Activated CD4-positive, alpha-beta T cell treated with anti-CD3 and anti-CD28 coated beads for 36 hours (primary cell): ENCODE measurements at regions of chr7 and their contacts with region 1.

Region 1: DNA sequence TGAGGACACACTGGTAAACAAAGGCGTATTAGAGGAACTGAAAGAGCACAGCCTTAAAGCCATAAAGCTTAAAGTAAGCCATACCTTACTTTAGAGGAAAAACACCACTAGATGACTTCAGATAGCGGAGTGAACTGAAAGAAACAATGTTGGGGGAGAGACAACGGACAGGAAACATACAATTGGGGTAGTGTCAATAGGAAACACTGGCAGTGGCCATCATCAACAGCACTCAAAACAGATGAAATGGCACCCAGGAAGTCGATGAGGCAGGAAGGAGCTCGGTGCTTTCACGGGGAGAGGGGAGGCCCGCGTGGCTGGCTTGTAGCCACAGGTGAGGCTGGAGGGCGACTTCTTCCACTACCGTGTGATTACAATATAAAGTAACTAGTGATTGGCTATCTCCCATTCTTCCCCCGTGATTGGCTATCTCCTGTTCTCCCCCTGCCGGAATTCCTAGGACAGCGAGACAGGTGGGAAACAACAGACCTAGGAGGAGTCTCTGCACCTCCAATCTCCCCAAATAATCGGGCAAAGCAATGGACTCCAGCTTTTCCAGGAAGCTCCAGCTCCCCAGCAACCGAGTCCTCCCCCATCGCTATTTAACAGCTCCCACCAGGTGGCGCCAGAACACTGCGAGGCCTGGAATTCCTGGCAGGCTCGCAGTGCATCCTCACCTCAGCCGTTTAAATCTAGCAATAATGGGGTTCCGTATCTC is 2.4 kb upstream of the TAS2R38 start:
- DNase-seq: peak; percentile 87
- ATAC-seq: peak; percentile 96
- H3K4me3 Mint-ChIP-seq: peak overlapping the region; percentile 63
- H3K27ac Mint-ChIP-seq: peak overlapping the region; percentile 65
- H3K4me1 Mint-ChIP-seq: peaks cover 10% of the 10 kb centered on the region
- H3K27me3 Mint-ChIP-seq: no peaks in the 10 kb centered on the region

Region 2: DNA sequence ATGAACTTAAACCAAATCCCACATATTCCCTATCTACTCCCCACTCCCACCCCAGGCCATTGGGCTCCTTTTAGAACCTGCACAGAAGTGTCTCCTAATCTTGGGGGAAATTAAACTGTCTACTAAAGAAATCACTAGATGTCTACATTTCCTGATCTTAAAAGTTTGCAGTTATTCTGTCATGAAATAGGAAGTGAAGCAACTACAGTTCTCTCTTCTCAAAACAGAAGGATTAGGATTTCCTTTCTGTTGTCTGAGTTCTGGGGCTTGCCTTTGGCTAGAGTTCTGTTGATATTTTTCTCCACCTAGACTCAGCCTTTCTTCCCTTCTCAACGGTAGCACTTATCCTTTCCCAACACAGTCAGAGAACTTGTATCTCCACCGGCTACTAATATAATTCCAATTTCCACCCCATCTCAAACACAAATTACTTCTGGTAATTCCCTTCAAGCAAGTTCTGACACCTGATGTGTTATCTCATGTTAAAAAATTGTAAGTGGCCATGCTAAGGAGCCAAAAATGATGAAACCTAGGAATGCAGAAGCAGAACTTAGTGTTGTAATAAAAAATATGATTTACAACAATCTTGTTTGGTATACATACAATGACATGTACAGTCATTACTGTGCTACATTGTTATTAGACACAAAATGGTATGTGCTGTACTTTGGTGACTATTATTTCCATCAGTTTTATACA is 47.7 kb before region 1 on chr7:
- CTCF ChIA-PET with region 1: no interaction called
- POLR2A ChIA-PET with region 1: no interaction called
- intact Hi-C with region 1: no loop called
- DNase-seq: no peak
- ATAC-seq: no peak
- H3K4me3 Mint-ChIP-seq: no peak overlapping the region
- H3K27ac Mint-ChIP-seq: no peak overlapping the region
- H3K4me1 Mint-ChIP-seq: no peaks in the 10 kb centered on the region
- H3K27me3 Mint-ChIP-seq: no peaks in the 10 kb centered on the region

Region 3: GRCh38 chr7:141960687-141961422 is 15.1 kb before region 1 on chr7:
- CTCF ChIA-PET with region 1: interaction called, 22 read pairs
- POLR2A ChIA-PET with region 1: no interaction called
- intact Hi-C with region 1: no loop called
- DNase-seq: no peak
- ATAC-seq: no peak
- H3K4me3 Mint-ChIP-seq: no peak overlapping the region
- H3K27ac Mint-ChIP-seq: no peak overlapping the region
- H3K4me1 Mint-ChIP-seq: peaks cover 3% of the 10 kb centered on the region
- H3K27me3 Mint-ChIP-seq: peaks cover 3% of the 10 kb centered on the region

Region 4: GRCh38 chr7:142188846-142189245 is 212.9 kb after region 1 on chr7:
- CTCF ChIA-PET with region 1: interaction called, 12 read pairs
- POLR2A ChIA-PET with region 1: no interaction called
- intact Hi-C with region 1: loop called (anchors 1 kb)
- DNase-seq: no peak
- ATAC-seq: no peak
- H3K4me3 Mint-ChIP-seq: no peak overlapping the region
- H3K27ac Mint-ChIP-seq: no peak overlapping the region
- H3K4me1 Mint-ChIP-seq: peaks cover 2% of the 10 kb centered on the region
- H3K27me3 Mint-ChIP-seq: peaks cover 13% of the 10 kb centered on the region

Region 5: DNA sequence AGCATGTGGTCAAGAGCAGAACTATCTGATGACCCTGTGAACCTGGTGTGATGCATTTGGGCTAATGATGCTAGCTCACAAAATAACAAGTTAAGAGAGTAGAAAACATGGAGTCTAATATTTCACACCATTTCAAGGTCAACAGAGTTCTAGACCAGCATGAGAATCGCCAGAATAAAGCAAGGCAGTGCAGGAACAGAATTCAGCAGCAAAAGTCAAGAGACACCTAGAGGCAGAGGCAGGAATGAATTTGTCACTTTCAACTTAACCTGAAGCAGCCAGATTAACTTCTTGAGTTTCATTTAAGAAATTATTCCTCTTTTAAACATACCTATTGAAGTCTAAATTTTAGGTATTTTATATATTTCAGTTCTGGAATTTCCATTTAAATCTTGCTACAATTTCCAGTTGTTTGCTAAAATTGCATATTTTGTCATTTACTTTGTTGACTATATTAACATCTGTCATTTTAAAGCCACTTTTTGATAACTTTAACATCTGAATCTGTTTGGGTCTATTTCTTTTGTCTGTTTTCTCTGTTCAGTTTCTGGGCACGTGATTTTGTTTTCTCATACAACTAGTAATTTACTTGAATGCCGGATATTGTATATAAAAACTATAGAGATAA is 326.1 kb after region 1 on chr7:
- CTCF ChIA-PET with region 1: interaction called, 5 read pairs
- POLR2A ChIA-PET with region 1: no interaction called
- intact Hi-C with region 1: loop called (anchors 2 to 5 kb)
- DNase-seq: no peak
- ATAC-seq: no peak
- H3K4me3 Mint-ChIP-seq: no peak overlapping the region
- H3K27ac Mint-ChIP-seq: no peak overlapping the region
- H3K4me1 Mint-ChIP-seq: peaks cover 29% of the 10 kb centered on the region
- H3K27me3 Mint-ChIP-seq: peaks cover 8% of the 10 kb centered on the region

Region 6: GRCh38 chr7:142385491-142386340 is 409.8 kb after region 1 on chr7:
- CTCF ChIA-PET with region 1: interaction called, 3 read pairs
- POLR2A ChIA-PET with region 1: no interaction called
- intact Hi-C with region 1: loop called in 1 of 2 experiments (anchors 5 kb)
- DNase-seq: peak; percentile 72
- ATAC-seq: peak; percentile 50
- H3K4me3 Mint-ChIP-seq: no peak overlapping the region
- H3K27ac Mint-ChIP-seq: peak overlapping the region; percentile 67
- H3K4me1 Mint-ChIP-seq: peaks cover 27% of the 10 kb centered on the region
- H3K27me3 Mint-ChIP-seq: no peaks in the 10 kb centered on the region

Region 7: DNA sequence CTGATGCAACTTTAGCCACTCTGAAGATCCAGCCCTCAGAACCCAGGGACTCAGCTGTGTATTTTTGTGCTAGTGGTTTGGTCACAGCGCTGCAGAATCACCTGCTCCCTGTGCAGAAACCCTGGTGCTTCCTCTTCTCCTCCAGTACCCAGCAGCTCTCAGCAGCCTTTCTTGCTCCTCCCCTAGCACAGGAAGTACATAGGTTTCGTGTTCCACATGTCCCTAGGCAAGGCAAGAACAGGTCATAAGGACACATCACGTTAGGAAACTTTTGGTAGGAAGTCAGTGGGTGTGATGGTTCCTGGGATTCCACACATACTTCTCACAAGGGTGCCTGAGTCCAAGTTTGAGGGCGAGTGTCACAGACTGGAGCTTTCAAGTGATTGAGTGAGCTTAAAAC is 605.4 kb after region 1 on chr7:
- CTCF ChIA-PET with region 1: no interaction called
- POLR2A ChIA-PET with region 1: no interaction called
- intact Hi-C with region 1: no loop called
- DNase-seq: peak; percentile 41
- ATAC-seq: peak; percentile 80
- H3K4me3 Mint-ChIP-seq: peak overlapping the region; percentile 27
- H3K27ac Mint-ChIP-seq: peak overlapping the region; percentile 78
- H3K4me1 Mint-ChIP-seq: peaks cover 34% of the 10 kb centered on the region
- H3K27me3 Mint-ChIP-seq: no peaks in the 10 kb centered on the region

Region 8: GRCh38 chr7:142853739-142854371 is 877.9 kb after region 1 on chr7:
- CTCF ChIA-PET with region 1: no interaction called
- POLR2A ChIA-PET with region 1: no interaction called
- intact Hi-C with region 1: loop called in 1 of 2 experiments (anchors 10 kb)
- DNase-seq: peak; percentile 85
- ATAC-seq: peak; percentile 88
- H3K4me3 Mint-ChIP-seq: peak overlapping the region; percentile 96
- H3K27ac Mint-ChIP-seq: peak overlapping the region; percentile 78
- H3K4me1 Mint-ChIP-seq: peaks cover 27% of the 10 kb centered on the region
- H3K27me3 Mint-ChIP-seq: peaks cover 2% of the 10 kb centered on the region